ENCODE measurements at regions of chr3 and their contacts with region 1.

Region 1: DNA sequence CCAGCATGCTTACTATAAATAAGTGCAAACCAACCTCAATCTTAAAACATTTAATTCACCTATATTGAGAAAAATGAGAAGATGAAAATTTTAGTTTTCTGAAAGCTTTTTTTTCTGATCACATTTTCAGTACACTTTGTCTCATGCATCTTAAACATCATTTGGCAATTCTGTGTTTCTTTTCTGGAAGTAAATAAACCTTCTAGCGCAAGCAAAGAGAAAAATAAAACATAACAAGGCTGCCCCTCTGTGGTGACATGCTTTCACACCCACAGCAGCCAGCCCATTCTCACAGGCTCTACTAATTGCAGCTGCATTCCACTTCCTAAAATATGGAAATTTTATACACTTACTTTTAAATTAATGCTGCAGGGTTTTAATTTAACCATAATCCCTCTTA is 90.1 kb downstream of the NEK10 start:
- DNase-seq: peak; percentile 38
- H3K4me3 ChIP-seq: no peak overlapping the region
- H3K27ac ChIP-seq: no peak overlapping the region
- H3K4me1 ChIP-seq: no peaks in the 10 kb centered on the region
- H3K27me3 ChIP-seq: no peaks in the 10 kb centered on the region
- CTCF ChIP-seq: peak; percentile 50
- EP300 ChIP-seq: no peak
- RAD21 ChIP-seq: peak; percentile 71

Region 2: DNA sequence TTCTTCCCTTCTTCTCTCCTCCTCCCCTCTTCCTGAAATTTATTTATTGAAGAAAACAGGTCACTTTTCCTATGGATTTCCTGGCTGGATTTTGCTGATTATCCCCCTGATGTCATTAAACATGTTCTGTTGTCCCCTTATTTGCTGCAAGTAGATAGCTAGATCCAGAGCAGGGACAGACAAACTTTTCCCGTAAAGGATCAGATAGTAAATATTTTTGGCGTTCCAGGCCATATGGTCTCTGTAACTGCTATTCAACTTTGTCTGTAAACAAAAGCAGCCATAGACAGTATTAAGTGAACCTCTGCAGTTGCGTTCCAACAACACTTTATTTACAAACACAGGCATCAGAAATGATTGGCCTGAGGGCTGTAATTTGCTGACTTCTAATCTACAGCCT is 151.2 kb before region 1 on chr3:
- CTCF ChIA-PET with region 1: interaction called, 10 read pairs
- POLR2A ChIA-PET with region 1: no interaction called
- DNase-seq: peak; percentile 10
- H3K4me3 ChIP-seq: no peak overlapping the region
- H3K27ac ChIP-seq: peak overlapping the region in 1 of 2 experiments; percentile 89; a peak in 2 of 4 replicates
- H3K4me1 ChIP-seq: peaks cover 0 to 12% of the 10 kb centered on the region in 2 experiments; a peak in 2 of 4 replicates
- H3K27me3 ChIP-seq: no peaks in the 10 kb centered on the region
- CTCF ChIP-seq: no peak
- EP300 ChIP-seq: peak in 1 of 2 experiments; percentile 81; a peak in 2 of 4 replicates
- RAD21 ChIP-seq: no peak

Region 3: GRCh38 chr3:27666708-27667107 is 387.6 kb after region 1 on chr3:
- CTCF ChIA-PET with region 1: no interaction called
- POLR2A ChIA-PET with region 1: no interaction called
- DNase-seq: peak; percentile 72
- H3K4me3 ChIP-seq: no peak overlapping the region
- H3K27ac ChIP-seq: no peak overlapping the region
- H3K4me1 ChIP-seq: peaks cover 0 to 5% of the 10 kb centered on the region in 2 experiments; a peak in 1 of 4 replicates
- H3K27me3 ChIP-seq: no peaks in the 10 kb centered on the region
- CTCF ChIP-seq: no peak; the same call in 1 of the 2 replicates
- EP300 ChIP-seq: no peak
- RAD21 ChIP-seq: peak; percentile 29; the same call in 1 of the 2 replicates

Measured in SK-N-SH (cell line).